ENCODE measurements at regions of chr6 and their contacts with region 1.

Region 1: DNA sequence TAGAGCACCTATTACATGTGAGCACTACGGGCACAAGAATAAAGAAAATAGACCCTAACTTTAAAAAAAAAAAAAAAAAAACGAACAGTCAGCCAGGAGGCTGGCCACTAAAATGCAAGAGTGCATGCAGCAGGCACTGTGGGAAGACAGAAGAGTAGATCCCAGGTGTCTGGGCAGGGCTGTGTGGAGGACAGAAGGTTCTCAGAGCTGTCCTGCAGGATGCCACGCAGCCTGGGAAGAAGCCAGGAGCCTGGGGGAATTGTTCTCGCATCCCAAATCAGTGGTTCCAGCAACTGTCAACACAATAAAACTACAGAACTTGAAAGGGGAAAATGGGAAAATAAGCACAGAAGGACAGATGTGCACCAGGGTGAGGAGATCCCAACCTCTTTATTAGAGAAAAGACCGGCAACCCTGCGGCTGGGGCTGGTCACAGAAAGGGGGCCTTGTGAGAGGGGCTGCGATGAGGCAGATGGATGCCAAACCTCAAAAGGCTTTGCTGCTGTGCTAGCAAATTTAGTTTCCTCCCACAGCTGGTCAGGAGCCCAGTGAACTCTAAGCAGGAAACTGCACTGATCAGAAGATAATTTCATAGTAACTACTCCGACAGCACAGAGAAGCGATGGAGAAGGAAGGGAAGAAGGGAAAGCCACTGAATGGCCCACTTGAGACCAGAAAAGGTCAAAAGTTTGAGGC is 30.9 kb downstream of the MAP3K5 start:
- DNase-seq: peak; percentile 67
- H3K4me3 ChIP-seq: peak overlapping the region; percentile 48
- H3K27ac ChIP-seq: peak overlapping the region; percentile 95
- H3K4me1 ChIP-seq: peaks cover 60% of the 10 kb centered on the region
- CTCF ChIP-seq: no peak

Region 2: GRCh38 chr6:135994857-135995544 is 766.4 kb before region 1 on chr6:
- CTCF ChIA-PET with region 1: no interaction called
- POLR2A ChIA-PET with region 1: no interaction called
- intact Hi-C with region 1: no loop called
- DNase-seq: no peak
- H3K4me3 ChIP-seq: no peak overlapping the region
- H3K27ac ChIP-seq: no peak overlapping the region
- H3K4me1 ChIP-seq: no peaks in the 10 kb centered on the region
- CTCF ChIP-seq: no peak

Region 3: GRCh38 chr6:136031982-136032381 is 729.4 kb before region 1 on chr6:
- CTCF ChIA-PET with region 1: no interaction called
- POLR2A ChIA-PET with region 1: no interaction called
- intact Hi-C with region 1: no loop called
- DNase-seq: peak; percentile 4
- H3K4me3 ChIP-seq: no peak overlapping the region
- H3K27ac ChIP-seq: no peak overlapping the region
- H3K4me1 ChIP-seq: no peaks in the 10 kb centered on the region
- CTCF ChIP-seq: peak; percentile 64

Region 4: DNA sequence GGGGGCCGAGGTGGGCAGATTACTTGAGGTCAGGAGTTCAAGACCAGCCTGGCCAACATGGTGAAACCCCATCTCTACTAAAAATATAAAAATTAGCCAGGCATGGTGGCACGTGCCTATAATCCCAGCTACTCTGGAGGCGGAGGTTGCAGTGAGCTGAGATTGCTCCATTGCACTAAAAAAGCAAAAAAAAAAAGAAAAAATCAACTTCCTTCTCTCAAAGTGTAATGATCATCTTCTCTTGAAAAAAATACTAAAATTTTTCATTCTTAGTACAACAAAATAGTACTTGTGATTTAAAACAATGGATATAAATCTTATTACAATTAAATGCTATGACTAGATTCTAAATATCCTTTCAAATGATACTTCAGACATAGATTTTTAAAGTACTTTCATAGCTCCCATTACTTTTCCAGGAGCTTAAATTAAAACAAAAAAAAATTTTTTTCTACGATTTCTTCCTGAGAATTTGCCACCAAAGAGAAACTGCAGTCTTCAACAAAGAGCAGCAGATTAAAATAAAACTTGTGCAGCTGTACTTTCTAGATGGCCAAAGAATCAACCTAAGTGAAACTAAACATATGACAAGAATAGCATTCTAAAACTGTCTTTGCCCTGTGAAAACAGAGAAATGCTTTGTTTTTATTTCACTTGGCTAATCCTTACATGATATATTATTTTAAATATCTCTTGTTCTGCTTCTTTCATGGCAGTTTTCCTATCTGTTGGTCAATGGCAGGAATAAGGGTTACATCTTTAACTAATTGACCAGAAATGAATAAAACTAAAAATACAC is 44.3 kb before region 1 on chr6:
- CTCF ChIA-PET with region 1: interaction called, 7 read pairs
- POLR2A ChIA-PET with region 1: interaction called, 135 read pairs
- intact Hi-C with region 1: loop called (anchors 1 kb)
- DNase-seq: peak; percentile 72
- H3K4me3 ChIP-seq: peak overlapping the region; percentile 59
- H3K27ac ChIP-seq: peak overlapping the region; percentile 93
- H3K4me1 ChIP-seq: peaks cover 54% of the 10 kb centered on the region
- CTCF ChIP-seq: no peak

Region 5: GRCh38 chr6:136723780-136724179 is 37.6 kb before region 1 on chr6:
- CTCF ChIA-PET with region 1: interaction called, 7 read pairs
- POLR2A ChIA-PET with region 1: interaction called, 135 read pairs
- intact Hi-C with region 1: loop called (anchors 1 kb)
- DNase-seq: peak; percentile 80
- H3K4me3 ChIP-seq: no peak overlapping the region
- H3K27ac ChIP-seq: peak overlapping the region; percentile 58
- H3K4me1 ChIP-seq: peaks cover 51% of the 10 kb centered on the region
- CTCF ChIP-seq: no peak

Region 6: GRCh38 chr6:136740050-136740974 is 21.1 kb before region 1 on chr6:
- CTCF ChIA-PET with region 1: no interaction called
- POLR2A ChIA-PET with region 1: interaction called, 20 read pairs
- intact Hi-C with region 1: no loop called
- DNase-seq: no peak
- H3K4me3 ChIP-seq: no peak overlapping the region
- H3K27ac ChIP-seq: no peak overlapping the region
- H3K4me1 ChIP-seq: peaks cover 26% of the 10 kb centered on the region
- CTCF ChIP-seq: no peak

Region 7: DNA sequence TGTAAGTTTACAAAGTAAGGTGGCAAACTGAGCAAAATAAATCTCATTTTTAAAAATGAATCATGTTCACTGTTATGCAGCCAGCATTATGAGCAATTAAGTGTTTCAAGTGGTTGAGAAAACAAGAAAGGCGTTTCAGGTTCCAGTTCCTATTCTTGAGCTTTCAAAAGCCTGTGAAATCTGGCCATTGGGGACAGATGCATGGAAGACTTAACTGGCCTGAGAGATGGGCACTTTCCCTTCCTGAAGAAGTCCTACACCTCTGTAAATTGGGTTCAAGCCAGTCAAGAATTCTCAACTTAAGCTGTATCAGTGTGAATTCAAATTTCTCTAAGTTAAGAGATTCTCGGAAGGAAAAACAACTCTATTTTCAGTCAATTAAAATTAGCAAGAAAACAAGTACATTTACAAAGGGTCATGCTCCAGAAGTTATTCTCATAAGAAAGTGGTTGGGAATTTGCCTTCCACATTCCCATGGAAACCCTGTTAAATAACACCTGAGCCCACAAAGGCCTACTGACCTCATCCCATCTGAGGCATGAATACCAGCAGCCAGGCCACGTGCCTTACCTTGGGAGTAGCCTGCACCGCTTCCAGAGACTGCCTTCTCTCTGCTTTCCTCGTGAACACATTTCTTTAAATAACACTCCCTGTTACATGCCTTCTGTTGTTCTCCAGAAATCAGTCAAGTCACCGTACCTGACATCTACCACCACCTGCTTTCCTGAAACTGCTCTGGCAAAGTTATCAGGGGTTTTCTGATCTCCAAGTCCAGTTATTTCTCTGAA is 11.5 kb after region 1 on chr6:
- CTCF ChIA-PET with region 1: no interaction called
- POLR2A ChIA-PET with region 1: interaction called, 14 read pairs
- intact Hi-C with region 1: no loop called
- DNase-seq: peak; percentile 45
- H3K4me3 ChIP-seq: no peak overlapping the region
- H3K27ac ChIP-seq: peak overlapping the region; percentile 23
- H3K4me1 ChIP-seq: peaks cover 32% of the 10 kb centered on the region
- CTCF ChIP-seq: no peak

Region 8: GRCh38 chr6:136783495-136784270 is 22.3 kb after region 1 on chr6:
- CTCF ChIA-PET with region 1: interaction called, 4 read pairs
- POLR2A ChIA-PET with region 1: interaction called, 142 read pairs
- intact Hi-C with region 1: loop called (anchors 1 kb)
- DNase-seq: peak; percentile 84
- H3K4me3 ChIP-seq: peak overlapping the region; percentile 67
- H3K27ac ChIP-seq: peak overlapping the region; percentile 61
- H3K4me1 ChIP-seq: peaks cover 54% of the 10 kb centered on the region
- CTCF ChIP-seq: peak; percentile 23; the same call in 1 of the 2 replicates

Region 9: GRCh38 chr6:137518386-137518983 is 757.1 kb after region 1 on chr6:
- CTCF ChIA-PET with region 1: no interaction called
- POLR2A ChIA-PET with region 1: no interaction called
- intact Hi-C with region 1: no loop called
- DNase-seq: no peak
- H3K4me3 ChIP-seq: no peak overlapping the region
- H3K27ac ChIP-seq: no peak overlapping the region
- H3K4me1 ChIP-seq: no peaks in the 10 kb centered on the region
- CTCF ChIP-seq: no peak